ENCODE measurements at regions of chrX and their contacts with region 1.

Region 1: DNA sequence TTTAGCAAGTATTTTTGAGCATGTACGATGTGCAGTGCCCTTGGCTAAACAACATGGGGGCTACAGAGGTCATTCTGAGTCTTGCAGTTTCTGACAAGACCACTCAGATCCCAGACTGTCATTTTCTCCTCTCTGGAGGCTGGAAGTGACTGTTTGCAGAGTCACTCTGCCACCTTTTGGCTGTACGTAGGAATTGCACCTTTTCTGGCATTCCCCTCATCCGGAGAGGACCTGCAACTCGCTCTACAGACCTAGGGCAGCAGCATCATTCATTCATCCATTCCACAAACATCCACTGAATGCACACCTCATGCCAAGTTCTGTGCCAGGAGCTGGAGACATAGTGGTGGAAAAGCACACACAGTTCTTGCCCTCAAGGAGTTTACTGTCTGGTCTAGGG is 160.4 kb upstream of the GPR101 start:
- DNase-seq: peak; percentile 23 to 25
- H3K4me3 ChIP-seq: no peak overlapping the region
- H3K4me3 Mint-ChIP-seq: no peak overlapping the region
- H3K27ac Mint-ChIP-seq: no peak overlapping the region
- H3K4me1 ChIP-seq: no peaks in the 10 kb centered on the region
- H3K4me1 Mint-ChIP-seq: no peaks in the 10 kb centered on the region
- H3K27me3 ChIP-seq: no peaks in the 10 kb centered on the region
- H3K27me3 Mint-ChIP-seq: peaks cover 3% of the 10 kb centered on the region
- CTCF ChIP-seq: peak; percentile 22 to 36

Region 2: DNA sequence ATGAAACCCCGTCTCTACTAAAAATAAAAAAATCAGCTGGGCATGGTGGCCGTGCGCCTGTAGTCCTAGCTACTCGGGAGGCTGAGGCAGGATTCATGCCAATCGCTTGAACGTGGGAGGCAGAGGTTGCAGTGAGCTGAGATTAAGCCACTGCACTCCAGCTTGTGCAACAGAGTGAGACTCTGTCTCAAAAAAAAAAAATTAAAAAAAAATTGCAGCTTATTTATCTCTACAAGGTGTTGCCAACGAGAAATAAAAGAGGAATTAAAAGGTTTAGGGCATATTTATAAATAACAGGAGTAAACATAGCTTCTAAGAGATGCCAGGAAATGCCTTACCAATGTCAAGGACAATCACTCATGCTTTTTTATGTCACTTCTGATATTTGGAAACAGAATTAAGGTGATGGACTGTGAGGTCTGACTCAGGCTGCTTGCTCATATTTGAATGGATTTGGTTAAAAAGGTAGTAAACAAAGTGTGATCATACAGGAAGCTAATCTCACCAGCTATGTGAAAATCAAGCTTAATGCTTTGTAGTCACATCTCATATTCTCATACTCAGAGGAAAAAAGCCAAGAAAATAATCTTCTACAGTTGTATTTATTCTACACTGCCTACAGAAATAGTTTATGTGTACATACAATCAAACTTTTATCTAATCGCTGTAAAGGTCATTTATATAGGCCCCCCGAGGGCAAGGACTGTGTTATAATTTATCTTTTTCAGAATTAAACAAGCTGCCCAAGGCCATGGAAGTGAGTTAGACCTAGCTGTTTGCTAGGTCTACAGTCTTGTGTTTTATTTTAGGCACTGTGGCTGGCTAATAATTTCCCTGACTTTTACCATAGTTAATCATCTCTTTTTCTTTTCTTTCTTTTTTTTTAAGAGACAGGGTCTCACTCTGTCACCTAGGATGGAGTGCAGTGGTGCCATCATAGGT is 252.5 kb before region 1 on chrX:
- CTCF ChIA-PET with region 1: no interaction called
- POLR2A ChIA-PET with region 1: no interaction called
- intact Hi-C with region 1: no loop called
- DNase-seq: no peak
- H3K4me3 ChIP-seq: no peak overlapping the region
- H3K4me3 Mint-ChIP-seq: no peak overlapping the region
- H3K27ac Mint-ChIP-seq: no peak overlapping the region
- H3K4me1 ChIP-seq: no peaks in the 10 kb centered on the region
- H3K4me1 Mint-ChIP-seq: no peaks in the 10 kb centered on the region
- H3K27me3 ChIP-seq: no peaks in the 10 kb centered on the region
- H3K27me3 Mint-ChIP-seq: no peaks in the 10 kb centered on the region
- CTCF ChIP-seq: no peak

Region 3: DNA sequence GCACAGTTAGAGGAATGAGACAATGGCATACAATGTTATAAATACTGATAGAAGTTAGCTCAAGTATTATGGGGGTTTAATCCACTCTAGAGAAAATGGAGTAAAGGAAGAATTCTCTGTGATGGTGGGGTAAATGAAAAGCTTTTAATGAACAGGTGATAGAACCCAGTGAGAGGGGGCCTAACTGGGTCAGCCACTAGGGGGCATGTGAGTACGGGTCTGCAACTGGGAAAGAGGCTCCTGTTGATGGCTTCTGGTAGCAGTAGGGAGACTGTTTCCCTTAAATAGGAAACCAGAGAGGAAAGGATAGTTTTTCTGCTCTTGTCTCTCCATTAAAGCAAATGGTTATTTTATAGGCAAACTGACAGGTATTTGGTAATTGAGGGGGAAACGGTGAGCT is 27.6 kb before region 1 on chrX:
- CTCF ChIA-PET with region 1: interaction called, 10 read pairs
- POLR2A ChIA-PET with region 1: no interaction called
- intact Hi-C with region 1: no loop called
- DNase-seq: peak in 1 of 2 experiments; percentile 10
- H3K4me3 ChIP-seq: no peak overlapping the region
- H3K4me3 Mint-ChIP-seq: no peak overlapping the region
- H3K27ac Mint-ChIP-seq: no peak overlapping the region
- H3K4me1 ChIP-seq: no peaks in the 10 kb centered on the region
- H3K4me1 Mint-ChIP-seq: no peaks in the 10 kb centered on the region
- H3K27me3 ChIP-seq: no peaks in the 10 kb centered on the region
- H3K27me3 Mint-ChIP-seq: no peaks in the 10 kb centered on the region
- CTCF ChIP-seq: peak in 1 of 2 experiments; percentile 37

Region 4: DNA sequence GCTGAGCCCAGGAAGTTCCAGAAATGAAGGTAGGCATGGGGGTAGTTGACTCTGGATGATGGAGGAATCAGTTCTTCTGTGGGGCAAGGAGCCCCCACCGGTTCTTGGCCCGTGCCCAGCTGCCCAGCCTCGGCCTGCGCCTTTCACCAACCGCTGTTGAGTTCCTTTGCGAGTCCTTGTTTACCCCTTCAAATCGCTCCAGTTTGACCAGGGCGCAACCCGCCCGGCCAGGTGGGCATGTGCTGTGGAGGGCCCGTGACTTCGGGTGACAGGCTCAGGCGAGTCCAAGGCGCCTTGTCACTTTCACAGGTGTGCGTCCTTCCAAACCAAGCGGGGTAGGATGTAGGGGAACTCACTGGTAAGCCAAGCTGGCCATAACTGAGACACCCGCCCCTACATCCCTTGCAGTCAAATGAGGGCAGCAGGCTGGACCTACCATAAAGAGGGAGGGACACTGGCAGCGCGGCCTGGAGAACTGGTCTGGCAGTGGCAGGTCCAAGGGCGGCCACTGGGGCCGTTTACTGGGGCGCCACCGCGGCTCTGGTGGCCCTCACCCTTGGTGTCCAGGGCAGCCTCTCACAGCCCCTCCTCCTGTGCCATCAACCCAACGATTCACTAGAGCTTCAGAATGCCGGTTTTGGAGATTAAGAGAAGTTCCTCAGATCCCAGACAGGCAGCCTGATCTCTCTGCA is 211.4 kb after region 1 on chrX:
- CTCF ChIA-PET with region 1: no interaction called
- POLR2A ChIA-PET with region 1: no interaction called
- intact Hi-C with region 1: no loop called
- DNase-seq: no peak
- H3K4me3 ChIP-seq: no peak overlapping the region
- H3K4me3 Mint-ChIP-seq: no peak overlapping the region
- H3K27ac Mint-ChIP-seq: no peak overlapping the region
- H3K4me1 ChIP-seq: no peaks in the 10 kb centered on the region
- H3K4me1 Mint-ChIP-seq: no peaks in the 10 kb centered on the region
- H3K27me3 ChIP-seq: no peaks in the 10 kb centered on the region
- H3K27me3 Mint-ChIP-seq: no peaks in the 10 kb centered on the region
- CTCF ChIP-seq: no peak

Measured in Caco-2 (cell line).